Activated CD8-positive, alpha-beta memory T cell treated with anti-CD3 and anti-CD28 coated beads, Interleukin-2, amount 10 ng/mL, durations not matched to agents 7 days and 5 days (primary cell): ENCODE measurements at regions of chr6 and their contacts with region 1.

Region 1: DNA sequence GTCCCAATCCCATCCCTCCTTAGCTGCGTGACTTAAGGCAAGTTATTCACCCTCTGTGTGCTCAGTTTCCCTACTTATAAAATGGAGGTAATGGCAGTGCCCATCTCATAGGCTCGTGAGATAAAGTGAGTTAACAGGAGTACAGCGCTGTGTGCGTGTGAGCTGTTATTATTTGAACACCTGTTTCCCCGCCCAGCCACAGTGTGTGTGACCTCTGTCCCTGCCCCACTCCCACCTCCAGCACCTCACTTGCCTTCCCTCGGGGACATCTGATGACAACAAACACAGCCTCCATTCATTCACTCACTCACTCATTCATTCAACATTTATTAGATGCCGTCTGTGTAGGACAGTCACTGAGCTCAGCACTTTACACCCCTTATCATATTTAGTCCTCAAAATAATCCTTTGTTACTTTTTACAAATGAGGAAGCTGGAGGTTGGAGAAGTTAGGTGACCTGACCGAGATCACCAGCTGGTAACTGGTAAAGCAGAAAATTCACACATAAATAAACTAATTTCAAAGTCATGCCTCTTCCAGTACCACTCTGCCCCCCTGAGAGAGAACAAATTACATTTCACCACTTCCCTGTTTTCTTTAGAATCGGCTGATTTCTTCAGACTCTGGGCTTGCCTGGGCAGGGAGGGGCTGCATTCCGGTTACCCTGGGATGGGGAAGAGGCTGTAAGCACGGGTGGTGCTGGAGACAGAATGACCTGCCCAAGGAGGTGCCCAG is 58.6 kb downstream of the CPNE5 start:
- DNase-seq: no peak
- ATAC-seq: no peak
- H3K4me3 Mint-ChIP-seq: no peak overlapping the region
- H3K27ac Mint-ChIP-seq: no peak overlapping the region
- H3K4me1 Mint-ChIP-seq: peaks cover 5% of the 10 kb centered on the region
- H3K27me3 Mint-ChIP-seq: peaks cover 30% of the 10 kb centered on the region

Region 2: DNA sequence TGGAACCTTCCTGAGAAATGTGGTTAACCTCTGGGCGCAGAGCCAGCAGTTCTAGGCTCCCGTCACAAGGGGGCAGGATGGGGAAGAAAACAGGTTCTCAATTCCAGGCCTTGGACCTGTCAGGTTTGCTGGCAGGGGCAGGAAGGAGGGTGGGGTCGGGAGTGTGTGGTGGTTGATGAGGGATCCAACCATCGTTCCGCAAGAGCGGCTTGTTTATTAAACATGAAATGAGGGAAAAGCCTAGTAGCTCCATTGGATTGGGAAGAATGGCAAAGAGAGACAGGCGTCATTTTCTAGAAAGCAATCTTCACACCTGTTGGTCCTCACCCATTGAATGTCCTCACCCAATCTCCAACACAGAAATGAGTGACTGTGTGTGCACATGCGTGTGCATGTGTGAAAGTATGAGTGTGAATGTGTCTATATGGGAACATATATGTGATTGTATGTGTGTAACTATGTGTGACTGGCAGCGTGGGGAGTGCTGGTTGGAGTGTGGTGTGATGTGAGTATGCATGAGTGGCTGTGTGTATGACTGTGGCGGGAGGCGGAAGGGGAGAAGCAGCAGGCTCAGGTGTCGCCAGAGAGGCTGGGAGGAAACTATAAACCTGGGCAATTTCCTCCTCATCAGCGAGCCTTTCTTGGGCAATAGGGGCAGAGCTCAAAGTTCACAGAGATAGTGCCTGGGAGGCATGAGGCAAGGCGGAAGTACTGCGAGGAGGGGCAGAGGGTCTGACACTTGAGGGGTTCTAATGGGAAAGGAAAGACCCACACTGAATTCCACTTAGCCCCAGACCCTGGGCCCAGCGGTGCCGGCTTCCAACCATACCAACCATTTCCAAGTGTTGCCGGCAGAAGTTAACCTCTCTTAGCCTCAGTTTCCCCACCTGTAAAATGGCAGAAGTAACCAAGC is 156.8 kb before region 1 on chr6:
- CTCF ChIA-PET with region 1: interaction called, 13 read pairs
- DNase-seq: peak; percentile 84
- ATAC-seq: peak; percentile 75
- H3K4me3 Mint-ChIP-seq: no peak overlapping the region
- H3K27ac Mint-ChIP-seq: peak overlapping the region; percentile 53
- H3K4me1 Mint-ChIP-seq: peaks cover 24% of the 10 kb centered on the region
- H3K27me3 Mint-ChIP-seq: no peaks in the 10 kb centered on the region

Region 3: GRCh38 chr6:36720251-36721141 is 60.1 kb before region 1 on chr6:
- CTCF ChIA-PET with region 1: no interaction called
- DNase-seq: no peak
- ATAC-seq: no peak
- H3K4me3 Mint-ChIP-seq: no peak overlapping the region
- H3K27ac Mint-ChIP-seq: no peak overlapping the region
- H3K4me1 Mint-ChIP-seq: no peaks in the 10 kb centered on the region
- H3K27me3 Mint-ChIP-seq: peaks cover 5% of the 10 kb centered on the region

Region 4: DNA sequence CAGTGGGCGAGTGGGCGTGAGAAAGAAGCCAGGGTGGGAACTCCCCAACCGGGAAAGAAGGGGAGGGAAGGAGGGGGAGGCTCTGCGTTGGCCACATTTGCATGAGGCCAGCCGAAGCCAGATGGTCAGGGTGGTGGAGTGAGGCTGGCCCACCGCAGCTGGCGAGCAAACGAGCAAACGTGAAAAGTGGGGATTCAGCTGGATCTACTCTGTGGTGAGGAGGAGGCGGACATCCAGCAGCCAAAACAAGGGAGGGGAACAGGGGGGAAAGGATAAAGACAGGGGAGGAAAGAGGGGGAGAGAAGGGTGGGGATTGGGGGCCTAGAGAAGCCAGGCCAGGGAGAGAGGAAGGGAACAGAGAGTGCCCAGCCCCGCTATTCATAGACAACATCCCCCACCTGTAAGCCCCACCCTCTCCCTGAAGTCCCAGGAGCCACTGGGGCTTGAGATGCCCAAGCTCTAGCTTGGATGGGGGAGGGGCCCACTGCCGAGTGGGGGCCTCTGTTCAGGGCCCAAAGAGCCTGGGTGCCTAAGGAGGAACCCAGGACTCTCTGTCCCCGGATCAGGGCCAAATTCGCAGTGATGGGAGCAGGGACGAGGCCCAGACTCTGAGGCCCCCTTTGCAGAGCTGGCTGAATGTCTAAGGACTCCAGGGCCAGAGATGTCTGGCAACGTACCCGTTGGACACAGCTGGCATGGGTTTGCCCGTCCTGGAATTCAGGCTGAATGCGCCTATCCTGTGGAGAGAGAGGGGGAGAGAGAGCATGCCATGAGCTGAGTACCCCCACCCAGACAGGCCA is 13.5 kb after region 1 on chr6:
- CTCF ChIA-PET with region 1: interaction called, 18 read pairs
- DNase-seq: no peak
- ATAC-seq: no peak
- H3K4me3 Mint-ChIP-seq: no peak overlapping the region
- H3K27ac Mint-ChIP-seq: no peak overlapping the region
- H3K4me1 Mint-ChIP-seq: no peaks in the 10 kb centered on the region
- H3K27me3 Mint-ChIP-seq: peaks cover 24% of the 10 kb centered on the region

Region 5: GRCh38 chr6:37010402-37010892 is 229.8 kb after region 1 on chr6:
- CTCF ChIA-PET with region 1: no interaction called
- DNase-seq: no peak
- ATAC-seq: no peak
- H3K4me3 Mint-ChIP-seq: no peak overlapping the region
- H3K27ac Mint-ChIP-seq: no peak overlapping the region
- H3K4me1 Mint-ChIP-seq: peaks cover 32% of the 10 kb centered on the region
- H3K27me3 Mint-ChIP-seq: no peaks in the 10 kb centered on the region